ENCODE measurements at regions of chr1 and their contacts with region 1.

Region 1: GRCh38 chr1:207797229-207797961 is 45.5 kb downstream of the CD46 start:
- DNase-seq: peak; percentile 85 to 91
- ATAC-seq: peak; percentile 77 to 79 (median 78)
- H3K4me3 ChIP-seq: no peak overlapping the region
- H3K27ac ChIP-seq: peak overlapping the region; percentile 52
- H3K4me1 ChIP-seq: peaks cover 8% of the 10 kb centered on the region
- H3K27me3 ChIP-seq: no peaks in the 10 kb centered on the region
- CTCF ChIP-seq: peak; percentile 84

Region 2: DNA sequence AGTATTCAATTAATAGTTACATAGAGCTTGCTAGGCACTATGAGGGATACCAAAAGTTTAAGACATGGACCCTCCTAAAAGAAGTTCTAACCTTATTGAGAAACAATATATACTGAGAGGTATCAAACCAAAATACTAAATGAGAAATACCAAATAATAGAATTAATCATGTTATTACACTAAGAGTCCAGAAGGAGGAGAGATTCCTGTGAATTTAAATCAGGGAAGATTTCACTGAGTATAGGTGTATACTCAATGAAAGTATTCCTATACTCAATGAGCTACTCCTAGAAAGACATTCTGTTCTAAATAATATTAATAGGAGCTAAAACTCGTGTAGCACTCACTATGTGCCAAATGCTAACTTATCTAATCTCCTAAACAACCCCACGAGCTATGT is 143.1 kb before region 1 on chr1:
- intact Hi-C with region 1: loop called in 1 of 2 experiments (anchors 10 kb)
- DNase-seq: no peak
- ATAC-seq: no peak
- H3K4me3 ChIP-seq: no peak overlapping the region
- H3K27ac ChIP-seq: no peak overlapping the region
- H3K4me1 ChIP-seq: no peaks in the 10 kb centered on the region
- H3K27me3 ChIP-seq: peaks cover 0 to 2% (median 0%) of the 10 kb centered on the region in 3 donors
- CTCF ChIP-seq: peak; percentile 16

Region 3: GRCh38 chr1:207751790-207752455 is 45.5 kb before region 1 on chr1 and contains the start of gene CD46:
- intact Hi-C with region 1: loop called in 1 of 2 experiments (anchors 5 kb)
- DNase-seq: peak; percentile 98 to 99
- ATAC-seq: peak; percentile 99 to 100 (median 100)
- H3K4me3 ChIP-seq: peak within 1 kb of the TSS; percentile 76
- H3K27ac ChIP-seq: peak within 1 kb of the TSS; percentile 78
- H3K4me1 ChIP-seq: peaks cover 41% of the 10 kb centered on the region
- H3K27me3 ChIP-seq: no peaks in the 10 kb centered on the region
- CTCF ChIP-seq: no peak
- total RNA-seq, gene CD46: 43.5 to 55.3 (median 47.4) TPM